A549 (cell line): ENCODE measurements at regions of chr5 and their contacts with region 1.

Region 1: GRCh38 chr5:17189381-17190036 is 27.9 kb upstream of the BASP1 start:
- DNase-seq: peak; percentile 49 to 83
- ATAC-seq: peak; percentile 64 to 79
- H3K4me3 ChIP-seq: no peak overlapping the region
- H3K27ac ChIP-seq: peak overlapping the region; percentile 8 to 75; a peak in 5 of 6 replicates
- H3K4me1 ChIP-seq: peaks cover 51% of the 10 kb centered on the region
- CTCF ChIP-seq: peak; percentile 91
- EP300 ChIP-seq: no peak
- POLR2A ChIP-seq: no peak
- RAD21 ChIP-seq: peak; percentile 86 to 95

Region 2: DNA sequence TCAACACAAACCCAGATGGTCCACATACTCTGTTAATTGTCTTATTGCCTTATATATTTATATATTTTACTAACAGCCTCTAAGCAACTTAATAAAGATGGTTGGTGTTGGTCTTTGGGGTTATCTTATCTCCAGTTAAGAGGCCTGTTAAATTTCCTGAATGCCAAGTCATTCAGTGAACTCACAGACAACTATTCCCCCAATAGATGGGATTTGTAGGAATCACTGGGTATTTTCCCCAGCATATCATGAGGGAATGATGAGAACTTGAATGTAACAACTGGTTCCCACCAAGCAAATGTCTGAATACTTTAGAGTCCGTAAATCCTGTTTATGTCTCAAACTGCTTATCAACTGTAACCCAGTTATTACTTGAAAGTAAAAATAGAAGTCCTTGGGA is 530.0 kb before region 1 on chr5:
- CTCF ChIA-PET with region 1: no interaction called
- POLR2A ChIA-PET with region 1: no interaction called
- DNase-seq: no peak
- ATAC-seq: no peak
- H3K4me3 ChIP-seq: no peak overlapping the region
- H3K27ac ChIP-seq: no peak overlapping the region
- H3K4me1 ChIP-seq: no peaks in the 10 kb centered on the region
- CTCF ChIP-seq: no peak
- EP300 ChIP-seq: no peak
- POLR2A ChIP-seq: no peak
- RAD21 ChIP-seq: no peak

Region 3: GRCh38 chr5:16679863-16680262 is 509.6 kb before region 1 on chr5:
- CTCF ChIA-PET with region 1: interaction called, 10 read pairs
- POLR2A ChIA-PET with region 1: no interaction called
- DNase-seq: no peak
- ATAC-seq: peak; percentile 59 to 62; a peak in 4 of 6 replicates
- H3K4me3 ChIP-seq: no peak overlapping the region
- H3K27ac ChIP-seq: no peak overlapping the region
- H3K4me1 ChIP-seq: no peaks in the 10 kb centered on the region
- CTCF ChIP-seq: no peak; the same call in 2 of the 3 replicates
- EP300 ChIP-seq: no peak
- POLR2A ChIP-seq: no peak
- RAD21 ChIP-seq: no peak

Region 4: GRCh38 chr5:16784843-16785791 is 404.4 kb before region 1 on chr5:
- CTCF ChIA-PET with region 1: interaction called, 18 read pairs
- POLR2A ChIA-PET with region 1: no interaction called
- DNase-seq: no peak
- ATAC-seq: peak in 1 of 2 experiments; percentile 27; a peak in 1 of 6 replicates
- H3K4me3 ChIP-seq: no peak overlapping the region
- H3K27ac ChIP-seq: no peak overlapping the region
- H3K4me1 ChIP-seq: peaks cover 30% of the 10 kb centered on the region
- CTCF ChIP-seq: no peak
- EP300 ChIP-seq: no peak
- POLR2A ChIP-seq: no peak
- RAD21 ChIP-seq: no peak

Region 5: DNA sequence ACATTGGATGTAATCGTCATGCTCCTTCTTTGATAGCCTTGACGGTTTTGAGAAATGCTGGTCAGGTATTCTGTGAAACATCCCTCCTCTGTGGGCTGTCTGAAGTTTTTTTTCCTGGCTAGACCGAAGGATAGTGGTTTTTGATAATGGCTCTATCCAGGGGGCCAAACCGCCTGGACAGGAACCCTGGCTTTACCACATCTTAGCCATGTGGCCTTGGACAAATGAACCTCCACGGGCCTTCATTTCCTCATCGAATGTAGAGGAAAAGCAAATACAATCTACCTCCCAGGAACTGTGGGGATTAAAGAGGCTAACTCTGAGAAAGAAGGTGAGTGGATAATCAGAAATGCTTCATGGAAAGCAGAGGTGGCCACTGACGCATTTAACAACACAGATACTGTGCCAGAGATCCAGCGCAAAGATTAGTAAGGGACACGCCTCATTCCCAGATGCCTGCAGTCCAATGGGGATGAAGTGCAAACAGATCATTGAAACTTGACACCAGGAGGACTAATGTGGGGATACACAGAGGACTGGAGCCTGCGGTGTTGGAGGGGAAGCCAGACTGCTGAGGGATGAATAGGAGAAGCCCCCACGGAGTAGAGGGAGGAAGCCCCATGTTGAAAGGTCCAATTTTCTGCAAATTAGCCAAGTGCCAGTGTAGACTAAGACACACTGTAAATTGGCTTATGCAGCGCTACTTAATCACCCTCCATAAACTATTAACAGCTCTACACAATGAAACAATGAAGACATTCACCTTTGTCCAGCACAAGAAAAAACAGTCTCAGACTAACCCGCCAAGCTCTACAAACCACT is 295.1 kb before region 1 on chr5:
- CTCF ChIA-PET with region 1: interaction called, 14 read pairs
- POLR2A ChIA-PET with region 1: no interaction called
- DNase-seq: peak; percentile 88 to 98
- ATAC-seq: peak; percentile 80 to 84
- H3K4me3 ChIP-seq: peak overlapping the region; percentile 22; the same call in 2 of the 3 replicates
- H3K27ac ChIP-seq: peak overlapping the region; percentile 95
- H3K4me1 ChIP-seq: peaks cover 93% of the 10 kb centered on the region
- CTCF ChIP-seq: no peak
- EP300 ChIP-seq: peak; percentile 98 to 99
- POLR2A ChIP-seq: no peak
- RAD21 ChIP-seq: peak; percentile 31 to 69; a peak in 4 of 5 replicates

Region 6: GRCh38 chr5:16934123-16934522 is 255.4 kb before region 1 on chr5:
- CTCF ChIA-PET with region 1: interaction called, 41 read pairs
- POLR2A ChIA-PET with region 1: interaction called, 7 read pairs
- DNase-seq: peak; percentile 80 to 84
- ATAC-seq: peak; percentile 68 to 82; a peak in 5 of 6 replicates
- H3K4me3 ChIP-seq: peak overlapping the region; percentile 89
- H3K27ac ChIP-seq: peak overlapping the region; percentile 89 to 95
- H3K4me1 ChIP-seq: peaks cover 45% of the 10 kb centered on the region
- CTCF ChIP-seq: peak; percentile 95
- EP300 ChIP-seq: no peak
- POLR2A ChIP-seq: no peak
- RAD21 ChIP-seq: peak; percentile 76 to 82

Region 7: DNA sequence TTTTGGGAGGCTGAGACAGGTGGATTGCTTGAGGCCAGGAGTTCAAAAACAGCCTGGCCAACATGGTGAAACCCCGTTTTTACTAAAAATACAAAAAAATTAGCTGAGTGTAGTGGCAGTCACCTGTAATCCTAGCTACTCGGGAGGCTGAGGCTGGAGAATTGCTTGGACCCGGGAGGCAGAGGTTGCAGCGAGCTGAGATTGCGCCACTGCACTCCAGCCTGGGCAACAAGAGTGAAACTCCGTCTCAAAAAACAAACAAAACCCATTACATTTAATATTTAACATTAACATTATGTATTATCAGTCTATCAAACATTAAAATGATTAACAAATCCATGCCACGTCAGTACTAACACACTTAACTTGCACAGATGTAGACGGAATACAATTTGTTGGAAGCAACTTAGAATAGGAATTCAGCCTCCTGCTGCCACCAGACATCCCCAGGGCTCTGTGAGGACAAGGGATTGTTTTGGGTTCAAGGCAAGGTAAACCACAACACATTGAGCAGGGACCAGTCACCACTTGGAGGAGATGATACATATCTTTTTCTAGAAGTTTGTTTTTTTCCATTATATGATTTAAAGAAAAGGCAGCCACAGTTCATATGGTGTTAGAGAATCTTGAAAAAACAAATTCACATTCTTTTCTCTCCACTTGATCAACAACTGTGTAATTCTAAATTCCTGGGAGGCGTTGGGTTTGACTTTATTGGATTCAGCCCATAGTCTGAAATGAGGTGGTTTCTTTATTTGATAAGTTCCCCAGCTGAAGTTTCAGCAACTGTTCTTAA is 76.1 kb before region 1 on chr5:
- CTCF ChIA-PET with region 1: interaction called, 12 read pairs
- POLR2A ChIA-PET with region 1: no interaction called
- DNase-seq: peak; percentile 55 to 95
- ATAC-seq: peak; percentile 86 to 88
- H3K4me3 ChIP-seq: peak overlapping the region; percentile 7; the same call in 1 of the 3 replicates
- H3K27ac ChIP-seq: peak overlapping the region; percentile 76 to 92
- H3K4me1 ChIP-seq: peaks cover 68% of the 10 kb centered on the region
- CTCF ChIP-seq: no peak
- EP300 ChIP-seq: peak; percentile 67 to 89; a peak in 3 of 5 replicates
- POLR2A ChIP-seq: no peak
- RAD21 ChIP-seq: peak; percentile 17 to 36

Region 8: DNA sequence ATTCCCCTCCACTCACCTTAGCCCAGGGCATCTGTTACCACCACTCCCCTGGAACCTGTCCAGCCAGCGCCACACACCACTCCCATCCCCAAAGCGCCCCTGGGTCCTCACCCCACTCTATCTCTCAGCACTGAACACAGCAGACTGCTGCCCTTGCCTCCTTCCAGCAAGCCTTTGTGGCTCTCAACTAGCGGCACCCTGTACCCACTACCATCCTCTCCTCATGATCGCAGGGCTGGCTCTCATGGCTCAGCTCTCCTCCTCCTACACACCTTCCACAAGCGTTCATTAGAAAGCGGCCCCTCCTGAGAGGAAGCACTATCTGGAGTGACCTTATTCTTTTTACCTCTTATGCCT is 14.6 kb after region 1 on chr5:
- CTCF ChIA-PET with region 1: interaction called, 28 read pairs
- POLR2A ChIA-PET with region 1: no interaction called
- DNase-seq: no peak
- ATAC-seq: peak; percentile 54 to 64
- H3K4me3 ChIP-seq: no peak overlapping the region
- H3K27ac ChIP-seq: no peak overlapping the region
- H3K4me1 ChIP-seq: peaks cover 17% of the 10 kb centered on the region
- CTCF ChIP-seq: no peak
- EP300 ChIP-seq: no peak
- POLR2A ChIP-seq: no peak
- RAD21 ChIP-seq: no peak